Mammary epithelial cell (primary cell): ENCODE measurements at regions of chr12 and their contacts with region 1.

Region 1: DNA sequence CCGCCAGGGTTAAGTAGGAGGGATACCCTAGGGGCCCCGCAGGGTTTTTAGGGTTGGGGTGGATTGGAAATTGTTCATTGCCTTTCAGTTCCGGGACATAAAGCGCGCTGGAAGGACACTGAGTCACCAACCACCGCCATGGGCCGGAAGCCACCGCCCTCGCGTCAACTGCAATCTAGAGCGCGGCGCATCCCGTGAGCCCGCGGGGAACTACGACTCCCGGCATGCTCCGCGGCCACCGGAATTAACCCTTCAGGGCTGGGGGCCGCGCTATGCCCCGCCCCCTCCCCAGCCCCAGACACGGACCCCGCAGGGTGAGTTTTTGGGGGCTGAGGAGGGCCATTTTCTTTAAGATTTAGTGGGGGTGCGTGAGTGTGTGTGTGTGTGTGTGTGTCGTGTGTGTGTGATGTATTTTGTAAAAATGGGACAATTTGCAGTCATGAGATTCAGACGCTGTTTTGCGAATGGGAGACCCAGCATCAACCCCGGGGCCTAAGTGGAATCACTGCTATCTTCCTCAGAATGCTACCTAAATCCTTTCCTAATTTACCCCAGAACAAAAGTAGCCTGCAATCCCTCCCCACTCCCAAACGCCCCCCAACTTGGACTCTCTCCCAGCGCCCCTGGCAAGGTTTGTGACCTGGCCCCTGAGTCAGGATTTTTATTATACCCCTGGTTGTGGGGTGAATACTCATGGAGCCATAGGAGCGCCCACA is at the start of gene MYL6B:
- DNase-seq: peak; percentile 89
- H3K4me3 ChIP-seq: peak within 1 kb of the TSS; percentile 63 to 70 (median 65)
- H3K27ac ChIP-seq: peak within 1 kb of the TSS; percentile 50
- H3K4me1 ChIP-seq: peaks cover 24% of the 10 kb centered on the region
- H3K27me3 ChIP-seq: no peaks in the 10 kb centered on the region
- CTCF ChIP-seq: no peak
- total RNA-seq, gene MYL6B: 24.7 to 57.1 TPM

Region 2: DNA sequence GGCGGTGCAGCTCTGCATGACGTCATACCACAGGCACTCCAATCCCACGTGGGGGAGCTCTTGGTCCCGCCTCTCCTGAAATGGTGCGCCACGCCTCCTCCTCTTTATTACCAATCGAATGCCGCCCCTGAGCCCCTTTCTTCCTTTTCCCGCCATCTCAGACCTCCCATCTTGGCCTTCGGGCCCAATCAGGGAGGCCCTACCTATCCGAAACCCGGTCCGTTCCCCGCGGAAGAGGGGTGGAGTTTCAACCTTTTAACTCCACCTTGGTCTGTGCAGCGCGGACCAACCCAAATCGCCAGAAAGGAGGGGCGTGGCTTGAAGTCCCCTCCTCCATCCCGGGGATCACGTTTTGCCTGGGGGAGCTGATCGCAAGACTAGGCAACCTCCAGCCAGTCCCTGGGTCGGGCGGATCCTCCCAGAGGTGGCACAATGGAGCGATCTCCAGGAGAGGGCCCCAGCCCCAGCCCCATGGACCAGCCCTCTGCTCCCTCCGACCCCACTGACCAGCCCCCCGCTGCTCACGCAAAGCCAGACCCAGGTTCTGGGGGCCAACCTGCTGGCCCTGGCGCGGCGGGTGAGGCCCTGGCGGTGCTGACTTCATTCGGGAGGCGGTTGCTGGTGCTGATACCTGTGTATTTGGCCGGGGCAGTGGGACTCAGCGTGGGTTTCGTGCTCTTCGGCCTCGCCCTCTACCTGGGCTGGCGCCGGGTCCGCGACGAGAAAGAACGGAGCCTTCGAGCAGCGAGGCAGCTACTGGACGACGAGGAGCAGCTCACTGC is 24.4 kb before region 1 on chr12 and contains the start of gene ESYT1:
- CTCF ChIA-PET with region 1: no interaction called
- dilution Hi-C with region 1: no loop called
- in situ Hi-C with region 1: no loop called
- intact Hi-C with region 1: loop called (anchors 1 kb)
- DNase-seq: peak; percentile 100
- H3K4me3 ChIP-seq: peak within 1 kb of the TSS; percentile 74 to 86 (median 81)
- H3K27ac ChIP-seq: peak within 1 kb of the TSS; percentile 82
- H3K4me1 ChIP-seq: peaks cover 18% of the 10 kb centered on the region
- H3K27me3 ChIP-seq: no peaks in the 10 kb centered on the region
- CTCF ChIP-seq: no peak
- total RNA-seq, gene ESYT1: 166 to 366 TPM